ENCODE measurements at regions of chr3 and their contacts with region 1.

Region 1: DNA sequence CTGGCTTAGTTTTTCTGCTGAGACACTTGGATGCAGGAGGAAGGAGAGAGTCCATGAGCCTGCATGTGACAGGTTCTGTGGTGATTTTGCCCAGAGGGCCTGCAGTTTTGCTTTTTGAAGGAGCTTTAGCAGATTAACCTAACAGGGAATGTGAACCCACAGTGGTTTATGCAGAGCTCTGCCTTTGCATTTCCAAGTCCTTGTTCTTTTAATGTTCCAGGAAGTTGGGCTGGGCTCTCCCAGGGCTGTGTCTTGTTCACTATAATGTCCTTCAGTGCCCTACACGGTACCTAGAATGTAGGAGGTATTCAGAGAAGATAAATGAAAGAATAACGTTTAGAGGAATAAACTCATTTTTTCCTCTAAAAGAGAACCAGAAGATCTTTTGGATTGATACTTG is 50.3 kb downstream of the PCCB start:
- DNase-seq: no peak

Region 2: GRCh38 chr3:137687181-137687879 is 1386.9 kb after region 1 on chr3:
- intact Hi-C with region 1: loop called in 1 of 2 experiments (anchors 5 kb)
- DNase-seq: no peak

Measured in posterior vena cava (tissue), 2 donors.